GM10248 (cell line): ENCODE measurements at regions of chr2 and their contacts with region 1.

Region 1: DNA sequence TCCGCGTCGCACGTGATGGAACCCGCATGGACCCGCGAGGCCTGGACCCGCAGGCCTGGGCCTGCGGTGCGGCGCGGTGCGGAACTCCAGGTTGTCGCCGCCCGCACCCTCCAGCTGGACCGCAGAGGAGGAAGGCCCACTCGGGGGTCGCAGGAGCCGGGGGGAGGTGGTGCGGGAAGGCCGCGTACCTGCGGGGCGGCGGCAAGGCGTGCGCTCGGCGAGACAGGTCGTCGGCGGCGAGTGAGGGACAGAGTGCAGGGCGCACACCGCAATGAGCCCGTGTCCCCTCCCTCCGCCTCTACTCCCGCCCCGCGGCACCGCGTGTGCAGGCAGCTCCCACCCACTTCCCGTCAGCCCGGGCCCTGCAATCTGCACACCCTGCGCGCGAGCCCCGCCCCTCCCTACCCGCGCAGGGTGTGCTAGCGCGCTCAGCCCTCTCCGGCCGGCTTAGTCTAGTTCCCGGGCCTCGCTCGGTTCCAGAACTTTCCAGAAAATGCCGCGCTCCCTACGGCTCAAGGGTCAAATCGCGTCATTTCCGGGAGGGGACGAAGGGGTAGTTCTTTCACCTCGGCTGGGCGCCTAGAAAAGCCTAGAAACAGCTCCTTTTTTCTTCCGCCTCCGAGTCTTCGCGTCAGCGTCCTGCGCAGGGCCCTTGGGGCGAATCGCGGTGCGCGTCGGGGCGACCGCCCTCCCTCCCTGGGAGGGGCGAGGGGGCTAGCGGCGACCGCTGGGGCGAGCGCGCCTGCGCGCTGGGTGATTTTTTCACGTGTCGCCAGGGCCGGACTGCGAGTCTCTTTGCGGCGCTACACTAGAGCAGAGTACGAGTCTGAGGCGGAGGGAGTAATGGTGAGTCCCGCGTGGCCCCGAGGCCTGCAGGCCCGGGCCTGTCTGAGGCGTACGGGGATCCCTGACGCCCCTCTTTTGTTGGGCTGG is at the starts of genes HSPD1 and HSPE1:
- DNase-seq: peak; percentile 96
- CTCF ChIP-seq: peak; percentile 77

Region 2: DNA sequence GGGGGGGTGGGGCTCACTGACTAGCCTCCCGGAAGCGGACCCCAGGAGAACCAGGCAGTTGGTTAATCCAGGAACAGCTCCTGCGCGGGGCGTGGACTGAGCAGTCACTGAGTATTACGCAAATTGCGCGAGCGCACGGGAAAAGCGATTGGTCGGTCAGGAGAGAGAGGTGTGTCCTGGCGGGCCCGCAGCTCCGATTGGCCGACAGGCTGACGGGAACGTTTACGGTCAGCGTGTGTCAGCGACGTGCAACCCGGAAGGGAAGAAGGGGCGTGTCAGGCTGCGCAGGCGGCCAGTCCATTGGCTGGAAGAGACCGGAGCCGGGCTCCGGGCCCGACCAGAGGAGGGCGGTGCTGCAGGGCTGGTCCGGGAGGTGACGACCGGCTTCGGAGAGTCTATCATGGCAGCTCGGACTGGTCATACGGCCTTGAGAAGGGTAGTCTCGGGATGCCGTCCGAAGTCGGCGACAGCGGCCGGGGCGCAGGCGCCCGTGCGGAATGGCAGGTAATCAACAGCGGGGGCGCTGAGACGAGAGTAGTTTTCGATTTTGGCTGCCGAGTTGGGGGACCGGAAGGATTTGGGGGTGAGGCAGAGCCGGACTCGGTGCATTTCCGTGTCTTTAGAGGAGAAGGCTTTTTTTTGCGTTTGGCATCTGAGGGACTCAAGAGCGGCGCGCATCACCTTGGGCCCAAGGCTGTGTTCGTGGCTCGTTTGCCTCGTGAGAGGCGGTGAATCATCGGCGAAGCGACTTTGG is 46.5 kb before region 1 on chr2 and contains the start of gene COQ10B:
- CTCF ChIA-PET with region 1: interaction called, 3 read pairs
- POLR2A ChIA-PET with region 1: interaction called, 15 read pairs
- DNase-seq: peak; percentile 98
- CTCF ChIP-seq: peak; percentile 18

Region 3: DNA sequence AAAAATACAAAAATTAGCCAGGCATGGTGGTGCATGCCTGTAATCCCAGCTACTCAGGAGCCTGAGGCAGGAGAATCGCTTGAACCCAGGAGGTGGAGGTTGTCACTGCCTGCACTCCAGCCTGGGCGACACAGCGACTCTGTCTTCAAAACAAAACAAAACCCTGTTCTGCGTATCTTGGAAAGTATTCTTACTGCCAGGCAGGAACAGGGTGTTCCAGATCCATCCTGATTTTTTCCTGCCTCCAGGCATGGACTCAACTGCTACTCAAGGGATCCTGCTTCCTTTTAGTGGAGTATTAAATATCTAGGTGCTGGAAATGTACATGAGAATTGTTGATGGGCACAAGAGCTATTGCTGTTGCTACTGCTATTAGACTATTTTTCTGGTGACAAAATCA is 12.5 kb before region 1 on chr2:
- CTCF ChIA-PET with region 1: no interaction called
- POLR2A ChIA-PET with region 1: interaction called, 13 read pairs
- DNase-seq: no peak
- CTCF ChIP-seq: no peak

Region 4: GRCh38 chr2:197515739-197516392 is 16.0 kb after region 1 on chr2 and contains the start of gene MOB4:
- CTCF ChIA-PET with region 1: interaction called, 13 read pairs
- POLR2A ChIA-PET with region 1: interaction called, 22 read pairs
- DNase-seq: peak; percentile 96
- CTCF ChIP-seq: no peak

Region 5: DNA sequence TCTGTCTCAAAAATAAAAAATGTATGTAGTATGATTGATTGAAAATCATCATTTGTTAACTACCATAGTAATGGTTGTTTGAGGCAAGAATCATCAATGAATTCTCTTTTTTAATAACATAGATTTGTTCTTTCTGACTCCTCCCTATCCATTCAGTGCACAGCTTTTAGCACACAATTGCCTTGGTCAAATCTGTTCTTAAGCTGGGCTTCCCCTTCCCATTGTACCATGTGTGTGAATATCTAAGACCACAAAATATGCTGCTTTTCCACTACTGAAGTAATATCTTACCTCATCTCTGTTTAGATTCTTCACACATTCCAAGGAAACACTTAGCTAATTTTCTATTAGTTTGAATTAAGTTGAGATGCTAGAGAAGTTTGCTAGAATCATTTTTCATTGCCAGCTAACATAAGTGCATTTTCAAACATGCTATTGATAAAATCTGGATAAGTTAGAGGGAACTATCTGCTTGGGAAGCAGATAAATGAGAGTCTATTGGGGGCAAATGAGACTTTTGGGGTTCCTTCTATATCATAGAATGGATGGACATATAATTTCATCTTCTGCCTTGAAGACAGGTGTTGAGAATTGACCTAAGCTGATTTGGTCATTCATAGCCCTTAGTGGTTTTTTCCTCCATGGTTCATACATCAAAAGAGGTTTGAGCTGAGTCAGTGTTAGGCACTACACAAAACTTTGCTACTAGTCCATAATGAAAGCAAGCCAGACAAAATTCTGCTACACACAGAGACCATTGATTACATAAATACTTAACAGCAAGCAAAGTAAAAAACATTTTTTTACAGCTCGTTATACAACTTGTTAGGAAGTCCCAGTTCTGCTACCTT is 536.4 kb after region 1 on chr2:
- CTCF ChIA-PET with region 1: no interaction called
- POLR2A ChIA-PET with region 1: no interaction called
- DNase-seq: no peak
- CTCF ChIP-seq: no peak